ENCODE measurements at regions of chr12 and their contacts with region 1.

Region 1: DNA sequence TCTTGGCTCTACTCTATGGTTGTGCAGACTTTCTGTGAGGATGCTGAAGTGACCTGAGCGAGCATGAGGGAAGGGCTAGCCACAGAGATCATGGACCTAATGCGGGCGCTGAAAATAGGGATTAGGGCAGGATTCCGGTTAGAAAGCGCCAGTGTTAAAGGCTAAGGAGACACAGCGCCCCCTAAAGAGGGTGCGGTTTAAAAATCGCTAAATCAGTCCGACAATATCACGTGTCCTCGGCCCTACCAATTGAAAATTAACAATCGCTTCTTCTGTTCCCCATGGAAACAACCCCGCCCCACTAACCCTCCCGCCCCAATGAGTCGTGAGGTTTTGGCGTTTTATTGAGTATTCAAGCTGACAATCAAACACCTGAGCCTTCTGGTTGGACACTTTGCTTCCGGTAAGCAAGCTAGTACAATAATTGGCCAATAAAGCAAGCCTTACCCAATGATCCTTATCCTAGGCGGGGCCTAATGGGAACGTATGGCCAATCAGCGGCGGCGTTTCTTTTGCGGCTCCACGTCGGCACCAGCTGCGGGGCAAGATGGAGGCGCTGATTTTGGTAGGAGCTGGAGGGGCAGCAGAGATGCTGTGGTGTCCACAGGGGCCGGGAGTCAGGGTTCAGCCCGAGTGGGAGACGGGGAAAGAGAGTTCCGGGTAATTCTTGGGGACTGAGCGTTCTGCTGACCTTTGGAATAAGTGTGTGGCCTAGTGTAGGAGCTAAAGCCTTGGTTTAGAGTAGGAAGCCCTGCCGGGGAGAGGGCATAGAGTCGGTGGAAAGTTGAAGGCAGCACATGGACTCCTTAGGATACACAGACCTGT is at the start of gene COPZ1:
- DNase-seq: peak; percentile 99
- H3K4me3 ChIP-seq: peak within 1 kb of the TSS; percentile 75
- H3K27ac ChIP-seq: peak within 1 kb of the TSS; percentile 88
- H3K27me3 ChIP-seq: no peaks in the 10 kb centered on the region
- CTCF ChIP-seq: peak; percentile 83
- polyA plus RNA-seq, gene COPZ1: 355 and 404 TPM in 2 replicates

Region 2: DNA sequence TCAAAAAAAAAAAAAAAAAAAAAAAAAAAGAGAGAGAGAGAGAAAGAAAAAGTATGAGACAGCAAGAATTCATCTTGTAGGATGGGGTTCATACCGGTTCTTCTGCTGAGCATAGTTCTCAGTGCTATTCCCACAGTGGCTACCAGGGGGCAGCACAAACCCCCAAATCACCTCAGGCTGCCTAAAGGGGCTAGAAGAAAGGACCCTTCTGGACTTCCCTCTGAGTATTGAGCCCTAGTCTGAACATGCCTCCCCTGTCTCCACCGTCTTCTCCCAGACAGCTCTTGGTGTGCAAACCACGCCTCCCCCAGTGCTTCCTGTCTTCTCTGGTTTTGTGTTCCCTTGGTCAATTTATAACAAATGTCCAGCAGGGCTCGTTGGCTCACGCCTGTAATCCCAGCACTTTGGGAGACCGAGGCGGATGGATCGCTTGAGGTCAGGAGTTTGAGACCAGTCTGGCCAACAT is 104.7 kb before region 1 on chr12:
- CTCF ChIA-PET with region 1: interaction called, 40 read pairs
- POLR2A ChIA-PET with region 1: interaction called, 3 read pairs
- DNase-seq: peak; percentile 53
- H3K4me3 ChIP-seq: no peak overlapping the region
- H3K27ac ChIP-seq: no peak overlapping the region
- H3K27me3 ChIP-seq: no peaks in the 10 kb centered on the region
- CTCF ChIP-seq: peak; percentile 88

Region 3: DNA sequence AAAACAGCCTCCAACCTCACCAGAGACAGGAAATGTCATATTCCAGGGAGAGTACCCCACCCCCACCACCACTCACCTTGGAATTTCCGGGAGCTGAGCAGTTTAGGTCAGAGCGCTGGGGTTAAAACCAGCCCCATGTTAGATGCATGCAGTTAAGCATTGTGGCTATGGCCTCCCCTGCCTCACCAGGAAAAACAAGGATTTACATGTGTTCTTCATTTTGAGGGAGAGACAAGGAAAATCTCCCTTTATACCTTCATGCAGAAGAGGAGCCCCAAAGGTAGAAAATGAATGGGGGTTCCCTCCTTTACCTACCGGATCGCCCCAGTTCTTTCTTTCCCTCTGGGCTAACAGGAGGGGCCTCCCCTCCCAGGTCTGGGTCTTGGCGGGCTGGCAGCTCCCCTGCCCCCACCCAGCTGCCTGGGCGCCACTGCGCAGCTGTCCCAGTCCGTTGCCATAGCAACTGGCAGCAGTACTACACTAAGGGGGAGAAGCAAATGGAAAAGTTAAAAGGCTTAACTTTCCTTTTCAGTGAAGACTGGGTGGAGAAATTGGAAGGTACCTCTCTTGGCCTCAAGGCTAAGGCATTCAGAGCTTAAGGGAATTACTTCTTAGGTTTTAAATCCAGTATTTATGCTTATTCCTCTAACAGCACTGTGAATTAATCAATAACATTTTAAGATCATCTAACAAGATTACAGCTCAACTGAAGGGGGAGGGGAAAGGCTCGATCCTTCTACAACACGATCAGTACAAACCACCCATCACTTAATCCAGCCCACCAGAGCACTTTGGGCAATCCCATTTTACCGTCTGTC is 65.4 kb before region 1 on chr12:
- CTCF ChIA-PET with region 1: interaction called, 10 read pairs
- POLR2A ChIA-PET with region 1: interaction called, 3 read pairs
- DNase-seq: peak; percentile 63
- H3K4me3 ChIP-seq: peak overlapping the region; percentile 39
- H3K27ac ChIP-seq: peak overlapping the region; percentile 90
- H3K27me3 ChIP-seq: no peaks in the 10 kb centered on the region
- CTCF ChIP-seq: no peak

Region 4: DNA sequence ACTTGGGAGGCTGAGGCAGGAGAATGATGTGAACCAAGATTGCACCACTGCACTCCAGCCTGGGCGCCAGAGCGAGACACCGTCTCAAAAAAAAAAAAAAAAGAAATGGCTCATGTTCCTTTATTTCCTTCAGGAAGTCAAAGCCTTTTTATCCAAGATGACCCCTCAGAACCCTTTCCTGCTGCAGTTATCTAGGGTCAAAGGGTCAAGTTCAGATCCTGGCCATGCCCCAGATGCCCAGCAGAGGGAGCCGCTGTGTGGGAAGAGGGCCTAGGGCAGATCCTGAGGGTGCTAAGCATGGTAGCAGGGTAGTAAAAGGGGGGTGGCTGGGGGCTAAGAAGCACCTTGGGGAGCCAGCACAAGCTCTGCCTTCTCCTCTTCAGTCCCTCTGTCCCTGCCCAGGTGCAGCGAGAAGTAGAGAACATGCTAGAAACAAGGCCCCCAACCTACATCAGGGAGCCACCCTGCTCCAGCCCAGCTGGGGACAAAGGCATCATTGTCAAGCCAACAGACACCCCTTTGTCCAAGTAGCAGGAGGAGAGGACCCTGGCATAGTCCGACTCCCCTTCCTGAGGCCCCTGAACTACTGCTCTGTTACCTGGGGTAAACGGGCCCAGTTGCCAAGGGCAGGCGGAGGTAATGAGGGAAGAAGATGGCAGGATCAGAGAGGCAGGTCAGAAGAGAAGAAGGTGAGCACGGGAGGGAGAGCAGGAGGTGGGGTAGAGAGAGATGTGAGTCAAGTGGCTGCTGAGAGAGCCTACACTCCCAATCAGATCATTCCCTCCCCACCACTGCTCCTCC is 30.5 kb before region 1 on chr12:
- CTCF ChIA-PET with region 1: interaction called, 77 read pairs
- POLR2A ChIA-PET with region 1: interaction called, 5 read pairs
- DNase-seq: no peak
- H3K4me3 ChIP-seq: no peak overlapping the region
- H3K27ac ChIP-seq: no peak overlapping the region
- H3K27me3 ChIP-seq: peaks cover 13% of the 10 kb centered on the region
- CTCF ChIP-seq: peak; percentile 82

Region 5: DNA sequence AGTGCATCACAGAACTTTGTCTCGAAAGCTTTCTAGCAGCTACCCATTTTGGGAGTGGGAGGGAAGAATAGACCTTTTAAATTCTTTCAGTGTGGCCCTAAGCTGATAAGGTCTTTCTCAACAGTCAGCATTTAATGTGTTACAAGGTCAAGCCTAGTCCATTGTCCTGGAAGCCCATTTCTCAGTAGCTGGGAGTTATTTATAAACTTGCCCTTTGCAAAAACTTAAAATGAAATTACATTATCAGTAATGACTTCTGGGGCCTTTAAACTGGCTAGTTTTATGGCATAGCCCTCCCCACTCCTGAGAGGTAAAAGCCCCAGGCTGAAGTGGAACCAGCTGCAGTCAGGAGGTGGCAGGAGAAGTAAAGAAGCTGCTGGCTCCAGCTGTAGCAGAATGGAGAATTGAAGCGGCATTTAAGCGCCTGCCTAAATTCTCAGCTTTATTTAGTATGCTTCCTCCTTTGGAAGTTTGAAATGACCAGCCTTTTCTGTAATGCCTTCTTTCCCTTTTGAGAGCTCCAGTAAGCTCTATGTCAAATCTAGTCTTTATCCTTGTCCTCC is 12.5 kb after region 1 on chr12:
- CTCF ChIA-PET with region 1: interaction called, 122 read pairs
- POLR2A ChIA-PET with region 1: interaction called, 6 read pairs
- DNase-seq: no peak
- H3K4me3 ChIP-seq: no peak overlapping the region
- H3K27ac ChIP-seq: no peak overlapping the region
- H3K27me3 ChIP-seq: no peaks in the 10 kb centered on the region
- CTCF ChIP-seq: peak; percentile 11; the same call in 1 of the 2 replicates